IMR-90 (cell line): ENCODE measurements at regions of chr14 and their contacts with region 1.

Region 1: GRCh38 chr14:68780358-68781160 is 12.3 kb downstream of the ZFP36L1 start:
- DNase-seq: peak; percentile 62
- ATAC-seq: peak; percentile 82
- H3K4me3 ChIP-seq: no peak overlapping the region
- H3K27ac ChIP-seq: peak overlapping the region; percentile 45
- H3K4me1 ChIP-seq: peaks cover 24% of the 10 kb centered on the region
- H3K27me3 ChIP-seq: no peaks in the 10 kb centered on the region
- CTCF ChIP-seq: no peak
- POLR2A ChIP-seq: no peak
- RAD21 ChIP-seq: no peak

Region 2: GRCh38 chr14:68692916-68693771 is 87.4 kb before region 1 on chr14:
- CTCF ChIA-PET with region 1: interaction called, 3 read pairs
- POLR2A ChIA-PET with region 1: interaction called, 3 read pairs
- dilution Hi-C with region 1: no loop called
- in situ Hi-C with region 1: no loop called
- intact Hi-C with region 1: loop called (anchors 5 kb)
- DNase-seq: peak; percentile 82
- ATAC-seq: peak; percentile 7; the same call in 1 of the 2 replicates
- H3K4me3 ChIP-seq: no peak overlapping the region
- H3K27ac ChIP-seq: peak overlapping the region; percentile 6; the same call in 1 of the 2 replicates
- H3K4me1 ChIP-seq: peaks cover 42% of the 10 kb centered on the region
- H3K27me3 ChIP-seq: no peaks in the 10 kb centered on the region
- CTCF ChIP-seq: no peak
- POLR2A ChIP-seq: no peak
- RAD21 ChIP-seq: no peak

Region 3: DNA sequence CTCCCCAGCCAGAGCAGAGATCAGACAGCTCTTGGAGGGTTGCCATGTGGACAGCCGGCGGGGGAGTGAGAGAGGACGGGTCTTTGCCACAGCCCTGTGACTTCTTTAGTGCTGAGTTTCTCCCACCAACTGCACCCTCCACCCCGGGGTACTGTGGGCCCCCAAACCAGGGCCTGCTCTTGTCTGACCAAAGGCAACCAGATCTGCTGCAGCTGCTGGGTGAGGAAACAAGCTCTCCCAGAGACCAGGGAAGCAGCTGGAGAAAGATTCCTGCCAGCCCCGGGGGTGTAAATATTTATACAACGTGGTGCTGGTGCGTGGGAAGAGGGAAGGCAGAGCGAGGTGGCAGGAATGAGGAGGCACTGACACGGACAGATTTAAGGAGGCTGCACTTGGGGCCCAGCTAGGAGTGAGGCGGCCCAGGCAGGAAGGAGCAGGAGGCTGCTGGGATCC is 26.6 kb after region 1 on chr14:
- CTCF ChIA-PET with region 1: no interaction called
- POLR2A ChIA-PET with region 1: no interaction called
- dilution Hi-C with region 1: no loop called
- in situ Hi-C with region 1: no loop called
- intact Hi-C with region 1: loop called (anchors 1 kb)
- DNase-seq: peak; percentile 94
- ATAC-seq: peak; percentile 88
- H3K4me3 ChIP-seq: no peak overlapping the region
- H3K27ac ChIP-seq: peak overlapping the region; percentile 94
- H3K4me1 ChIP-seq: peaks cover 23% of the 10 kb centered on the region
- H3K27me3 ChIP-seq: no peaks in the 10 kb centered on the region
- CTCF ChIP-seq: no peak
- POLR2A ChIP-seq: 0 out of 2 replicates have a peak, but pooled peaks have one; percentile 20
- RAD21 ChIP-seq: no peak